ENCODE measurements at regions of chr12 and their contacts with region 1.

Region 1: DNA sequence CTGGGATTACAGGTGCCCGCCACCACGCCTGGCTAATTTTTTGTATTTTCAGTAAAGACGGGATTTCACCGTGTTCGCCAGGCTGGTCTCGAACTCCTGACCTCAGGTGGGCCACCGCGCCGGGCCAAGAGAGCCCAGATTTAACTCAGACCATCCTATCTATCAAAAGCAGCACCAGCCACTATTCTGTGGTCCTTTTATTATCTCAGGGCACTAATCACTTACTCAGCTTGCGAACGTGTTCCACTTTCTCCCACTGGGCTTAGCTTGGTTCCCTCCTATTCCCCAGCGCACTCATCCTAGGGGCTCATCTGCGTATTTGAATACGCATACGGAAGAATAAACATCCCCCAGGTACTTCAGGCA is 16.2 kb upstream of the AACS start:
- DNase-seq: no peak
- H3K4me3 ChIP-seq: peak overlapping the region; percentile 49; the same call in 1 of the 2 replicates
- H3K27ac ChIP-seq: no peak overlapping the region
- H3K4me1 ChIP-seq: no peaks in the 10 kb centered on the region
- H3K27me3 ChIP-seq: no peaks in the 10 kb centered on the region
- CTCF ChIP-seq: no peak

Region 2: DNA sequence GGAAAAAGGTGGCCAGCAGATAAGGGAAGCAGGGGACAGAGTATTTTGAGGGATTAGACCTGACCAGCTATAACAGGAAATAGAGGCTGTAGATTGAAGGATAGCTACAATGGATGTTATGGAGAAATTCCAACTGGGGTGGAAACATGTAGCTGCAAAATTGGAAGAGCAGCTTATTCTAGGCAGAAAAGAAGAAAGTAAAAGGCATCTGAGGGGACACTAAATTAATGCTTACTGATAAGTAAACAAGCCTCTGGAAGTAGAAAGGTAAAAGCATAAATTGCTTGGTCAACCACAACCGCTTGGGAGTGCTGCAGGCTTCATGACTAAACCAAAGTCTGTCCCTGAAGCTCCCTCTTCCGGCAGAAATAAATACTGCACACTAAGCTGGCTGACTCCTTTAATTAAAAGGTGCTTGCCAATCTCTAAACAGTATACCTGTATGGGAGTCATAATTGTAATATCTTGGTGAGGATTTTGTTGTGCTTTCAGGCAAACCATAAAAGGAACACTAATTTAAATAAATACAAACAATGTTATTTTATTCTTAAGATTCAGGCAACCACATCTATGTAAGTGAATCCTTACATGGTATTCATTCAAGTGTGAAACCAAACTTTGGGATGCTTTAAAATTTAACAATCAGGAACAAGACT is 142.3 kb before region 1 on chr12:
- CTCF ChIA-PET with region 1: no interaction called
- POLR2A ChIA-PET with region 1: no interaction called
- intact Hi-C with region 1: no loop called
- DNase-seq: peak; percentile 86 to 87
- H3K4me3 ChIP-seq: no peak overlapping the region
- H3K27ac ChIP-seq: no peak overlapping the region
- H3K4me1 ChIP-seq: peaks cover 40% of the 10 kb centered on the region
- H3K27me3 ChIP-seq: no peaks in the 10 kb centered on the region
- CTCF ChIP-seq: peak; percentile 97

Region 3: DNA sequence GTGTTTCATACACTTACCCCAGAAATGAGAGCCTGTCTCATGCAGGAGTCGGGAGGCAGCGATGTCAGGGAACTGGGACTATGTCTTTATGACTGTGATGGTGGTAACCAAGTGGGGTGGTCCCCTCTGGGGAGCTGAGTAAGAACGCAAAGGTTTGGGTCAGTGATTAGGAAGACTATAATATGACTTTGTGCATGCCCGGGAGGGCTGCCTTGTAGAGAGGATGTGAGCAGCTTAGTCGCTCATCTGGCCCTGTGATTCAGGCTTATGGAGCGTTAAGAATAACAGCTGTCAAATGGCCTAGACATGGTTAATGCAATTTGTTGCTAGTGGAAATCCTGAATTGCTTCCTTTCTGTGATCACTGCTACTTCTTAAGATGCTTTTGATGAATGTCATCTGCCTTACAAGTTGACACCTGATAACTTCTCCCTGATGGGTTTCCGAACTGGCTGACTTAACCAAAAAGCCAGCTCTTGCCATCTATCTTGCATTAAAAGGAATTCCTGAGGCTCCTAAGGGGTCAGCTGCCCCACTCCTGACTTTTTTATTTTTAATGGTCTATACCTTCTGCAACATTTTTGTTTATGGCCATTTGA is 19.2 kb before region 1 on chr12:
- CTCF ChIA-PET with region 1: no interaction called
- POLR2A ChIA-PET with region 1: no interaction called
- intact Hi-C with region 1: loop called (anchors 1 kb)
- DNase-seq: no peak
- H3K4me3 ChIP-seq: no peak overlapping the region
- H3K27ac ChIP-seq: no peak overlapping the region
- H3K4me1 ChIP-seq: no peaks in the 10 kb centered on the region
- H3K27me3 ChIP-seq: no peaks in the 10 kb centered on the region
- CTCF ChIP-seq: no peak

Region 4: DNA sequence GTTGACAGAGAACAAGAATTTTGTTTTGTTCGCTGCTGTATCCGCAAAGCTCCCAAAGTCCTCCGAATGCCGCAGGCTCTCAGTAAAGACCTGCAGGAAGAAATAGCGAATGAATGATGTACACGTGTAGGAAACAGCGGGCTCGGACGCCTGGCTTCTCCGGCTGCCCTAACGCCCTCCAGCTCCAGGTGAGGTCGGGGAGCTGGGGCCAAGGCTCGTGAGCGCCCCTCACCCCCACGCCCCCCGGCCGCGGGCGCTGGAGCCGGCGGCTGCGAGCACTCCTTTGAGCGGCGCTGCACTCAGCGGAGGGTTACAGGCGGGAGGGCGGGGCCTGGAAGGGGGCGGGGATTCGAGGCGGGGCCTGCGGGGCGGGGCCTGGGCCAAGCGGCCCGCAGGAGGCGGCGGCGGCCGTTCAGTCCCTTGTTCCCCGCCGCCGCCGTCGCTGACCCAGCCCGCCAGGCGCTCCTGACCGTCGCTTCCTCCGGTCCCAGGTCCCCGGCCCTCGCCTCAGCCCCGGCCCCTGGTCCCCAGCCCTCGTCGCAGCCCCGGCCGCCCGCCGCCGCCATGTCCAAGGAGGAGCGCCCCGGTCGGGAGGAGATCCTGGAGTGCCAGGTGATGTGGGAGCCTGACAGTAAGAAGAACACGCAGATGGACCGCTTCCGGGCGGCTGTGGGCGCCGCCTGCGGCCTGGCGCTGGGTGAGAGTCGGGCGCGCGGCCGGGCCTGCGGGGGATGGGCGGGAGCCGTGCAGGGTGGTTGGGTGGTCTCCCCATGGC is 16.1 kb after region 1 on chr12 and contains the start of gene AACS:
- CTCF ChIA-PET with region 1: no interaction called
- POLR2A ChIA-PET with region 1: no interaction called
- intact Hi-C with region 1: loop called (anchors 1 kb)
- DNase-seq: peak; percentile 37 to 66
- H3K4me3 ChIP-seq: peak within 1 kb of the TSS; percentile 90
- H3K27ac ChIP-seq: no peak within 1 kb of the TSS
- H3K4me1 ChIP-seq: peaks cover 16% of the 10 kb centered on the region; the same call in 1 of the 2 replicates
- H3K27me3 ChIP-seq: no peaks in the 10 kb centered on the region
- CTCF ChIP-seq: no peak
- total RNA-seq, gene AACS: 46.8 and 48.5 TPM in 2 replicates

Region 5: GRCh38 chr12:125092872-125093680 is 44.0 kb after region 1 on chr12:
- CTCF ChIA-PET with region 1: no interaction called
- POLR2A ChIA-PET with region 1: no interaction called
- intact Hi-C with region 1: no loop called
- DNase-seq: peak in 1 of 2 experiments; percentile 11
- H3K4me3 ChIP-seq: no peak overlapping the region
- H3K27ac ChIP-seq: no peak overlapping the region
- H3K4me1 ChIP-seq: no peaks in the 10 kb centered on the region
- H3K27me3 ChIP-seq: no peaks in the 10 kb centered on the region
- CTCF ChIP-seq: no peak